ENCODE measurements at regions of chrX and their contacts with region 1.

Region 1: DNA sequence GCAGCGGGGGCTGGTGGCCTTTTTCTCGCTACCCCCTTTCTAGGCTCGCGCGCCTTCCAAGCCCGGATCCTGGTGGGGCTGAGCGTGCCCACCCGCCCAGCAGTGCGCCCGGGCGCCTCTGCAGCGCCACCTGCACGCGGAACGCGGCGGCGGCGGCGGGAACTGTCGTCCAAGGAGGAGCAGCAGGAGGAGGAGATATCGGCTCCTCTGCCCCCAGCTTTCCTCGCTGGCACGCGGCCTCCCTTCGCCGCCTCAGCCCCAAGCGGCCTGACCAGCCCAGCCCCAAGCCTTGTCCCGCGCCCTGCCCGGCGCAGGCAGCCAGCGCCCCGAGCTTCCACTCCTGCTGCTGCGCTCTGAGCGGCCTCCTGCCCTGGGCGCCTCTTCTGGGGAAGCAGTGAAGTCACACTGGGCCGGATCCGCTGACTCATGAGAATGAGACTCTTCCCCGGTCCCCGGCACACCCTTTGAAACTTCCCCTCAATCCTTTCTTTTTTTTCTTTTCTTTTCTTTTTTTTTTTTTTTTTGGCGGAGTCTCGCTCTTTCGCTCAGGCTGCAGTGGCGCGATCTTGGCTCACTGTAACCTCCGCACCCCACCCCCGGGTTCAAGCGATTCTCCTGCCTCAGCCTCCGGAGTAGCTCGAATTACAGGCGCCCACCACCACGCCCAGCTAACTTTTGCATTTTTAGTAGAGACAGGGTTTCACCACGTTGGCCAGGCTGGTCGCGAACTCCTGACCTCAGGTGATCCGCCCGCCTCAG is 10.6 kb upstream of the ELF4 start:
- DNase-seq: peak; percentile 76 to 80
- ATAC-seq: peak; percentile 73 to 89 (median 76)
- H3K4me3 ChIP-seq: peak overlapping the region in 9 of 10 donors; percentile 11 to 56 (median 50)
- H3K27ac ChIP-seq: peak overlapping the region in 9 of 10 donors; percentile 62 to 90 (median 77)
- H3K4me1 ChIP-seq: peaks cover 0 to 33% (median 19%) of the 10 kb centered on the region in 9 donors
- H3K27me3 ChIP-seq: peaks cover 0 to 5% (median 0%) of the 10 kb centered on the region in 7 donors
- CTCF ChIP-seq: peak; percentile 56 to 79 (median 67)

Region 2: GRCh38 chrX:130165703-130166502 is 45.0 kb after region 1 on chrX and contains the start of gene AIFM1:
- intact Hi-C with region 1: loop called in 6 of 10 experiments (anchors 2 to 10 kb)
- DNase-seq: peak; percentile 91 to 92
- ATAC-seq: peak; percentile 97 to 99 (median 98)
- H3K4me3 ChIP-seq: peak within 1 kb of the TSS; percentile 44 to 80 (median 71)
- H3K27ac ChIP-seq: peak within 1 kb of the TSS; percentile 69 to 94 (median 90)
- H3K4me1 ChIP-seq: peaks cover 0 to 38% (median 8%) of the 10 kb centered on the region in 9 donors
- H3K27me3 ChIP-seq: no peaks in the 10 kb centered on the region
- CTCF ChIP-seq: no peak
- total RNA-seq, gene AIFM1: 93.8 to 165 (median 142) TPM

Region 3: GRCh38 chrX:130196466-130196865 is 75.5 kb after region 1 on chrX:
- intact Hi-C with region 1: loop called in 1 of 10 experiments (anchors 10 kb)
- DNase-seq: no peak
- ATAC-seq: no peak
- H3K4me3 ChIP-seq: no peak overlapping the region
- H3K27ac ChIP-seq: no peak overlapping the region
- H3K4me1 ChIP-seq: no peaks in the 10 kb centered on the region
- H3K27me3 ChIP-seq: no peaks in the 10 kb centered on the region
- CTCF ChIP-seq: no peak

Region 4: DNA sequence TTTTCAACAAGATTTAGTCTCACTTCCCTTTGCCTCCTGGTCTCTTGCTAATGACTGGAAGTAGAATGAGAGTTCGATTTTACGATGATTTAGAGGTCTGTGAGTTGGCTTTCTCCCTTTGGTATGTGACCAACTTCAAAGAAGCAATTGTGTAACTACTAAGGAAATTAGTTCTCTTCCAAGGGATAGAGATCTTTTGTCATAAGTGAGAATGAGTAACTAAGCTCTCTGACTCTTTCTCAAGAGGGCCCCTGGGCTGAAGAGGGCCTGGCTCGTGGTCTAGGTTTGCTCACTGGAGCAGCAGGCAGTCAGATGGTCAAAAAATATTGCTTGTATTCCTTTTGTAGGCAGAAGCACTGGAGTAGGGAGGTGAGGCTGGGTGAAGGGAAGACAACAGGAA is 605.7 kb after region 1 on chrX:
- intact Hi-C with region 1: no loop called
- DNase-seq: no peak
- ATAC-seq: no peak
- H3K4me3 ChIP-seq: no peak overlapping the region
- H3K27ac ChIP-seq: no peak overlapping the region
- H3K4me1 ChIP-seq: no peaks in the 10 kb centered on the region
- H3K27me3 ChIP-seq: no peaks in the 10 kb centered on the region
- CTCF ChIP-seq: no peak

Region 5: GRCh38 chrX:130887376-130887775 is 766.5 kb after region 1 on chrX:
- intact Hi-C with region 1: no loop called
- DNase-seq: no peak
- ATAC-seq: no peak
- H3K4me3 ChIP-seq: peak overlapping the region in 1 of 10 donors; percentile 12
- H3K27ac ChIP-seq: no peak overlapping the region
- H3K4me1 ChIP-seq: peaks cover 0 to 3% (median 0%) of the 10 kb centered on the region in 9 donors
- H3K27me3 ChIP-seq: peaks cover 0 to 36% (median 0%) of the 10 kb centered on the region in 7 donors
- CTCF ChIP-seq: no peak